ENCODE measurements at regions of chr11 and their contacts with region 1.

Region 1: DNA sequence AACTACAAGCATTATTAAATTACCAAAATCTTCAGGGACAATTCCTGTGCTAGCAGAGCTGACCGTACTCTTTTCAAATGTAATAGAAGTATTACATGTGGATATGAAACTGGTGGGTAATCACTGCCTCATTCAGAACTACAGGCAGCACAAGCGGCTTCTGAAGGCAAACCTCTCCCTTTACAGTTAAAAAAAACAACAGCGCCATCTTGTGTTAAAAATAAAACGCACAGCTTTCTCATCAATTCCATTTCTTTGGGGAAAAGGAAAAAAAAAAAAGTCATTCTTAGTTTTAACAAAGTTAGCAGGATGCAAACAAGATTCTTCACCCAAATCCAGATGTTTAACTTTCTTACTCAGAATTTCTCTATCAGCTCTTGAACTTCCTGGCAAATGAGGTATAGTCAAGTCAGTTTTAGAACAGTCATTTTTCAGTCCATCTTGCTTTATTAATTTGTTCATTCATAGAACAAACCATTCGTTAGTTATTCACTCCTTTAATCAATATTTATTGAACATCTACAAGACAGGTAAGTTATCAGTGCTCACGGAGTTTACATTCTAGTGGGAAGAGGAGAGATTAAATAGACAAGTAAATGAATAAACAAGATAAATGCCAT is 331.8 kb upstream of the MPPED2 start:
- DNase-seq: peak; percentile 26
- H3K4me3 ChIP-seq: no peak overlapping the region
- H3K27ac ChIP-seq: no peak overlapping the region
- H3K4me1 ChIP-seq: no peaks in the 10 kb centered on the region
- H3K27me3 ChIP-seq: peaks cover 4% of the 10 kb centered on the region
- CTCF ChIP-seq: peak; percentile 58 to 61

Region 2: DNA sequence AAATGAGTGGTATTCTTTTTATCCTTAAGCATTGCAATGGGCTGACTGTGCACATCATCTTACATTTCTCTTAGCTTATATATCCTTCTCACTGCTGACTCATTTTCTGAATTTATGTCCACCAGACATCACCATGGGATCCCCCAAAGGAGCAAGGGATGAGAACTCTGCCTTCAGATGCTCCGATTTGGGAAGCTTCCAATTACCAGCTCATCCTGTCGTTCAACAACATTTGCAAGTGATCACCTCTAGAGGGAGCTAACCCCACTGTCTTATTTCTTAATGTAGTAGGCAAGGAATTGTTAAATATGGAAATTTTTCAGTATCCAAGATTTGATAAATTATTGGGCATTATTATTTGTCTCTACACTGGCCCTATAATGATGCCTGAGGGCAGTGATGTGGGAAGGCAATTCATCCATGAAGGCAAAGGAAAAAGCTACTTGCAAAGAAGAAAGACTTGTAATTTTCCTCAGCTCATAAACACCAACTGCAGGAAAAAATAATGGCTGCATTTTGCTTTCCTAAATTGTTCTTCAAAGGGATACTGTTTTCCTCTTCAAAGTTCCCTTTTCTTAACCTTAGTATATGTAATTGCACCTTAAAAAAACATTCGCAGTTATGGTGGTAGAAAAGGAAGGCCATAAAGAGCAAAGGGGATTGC is 789.6 kb before region 1 on chr11:
- CTCF ChIA-PET with region 1: no interaction called
- dilution Hi-C with region 1: no loop called
- in situ Hi-C with region 1: no loop called
- intact Hi-C with region 1: loop called (anchors 10 kb)
- DNase-seq: peak; percentile 32
- H3K4me3 ChIP-seq: no peak overlapping the region
- H3K27ac ChIP-seq: no peak overlapping the region
- H3K4me1 ChIP-seq: no peaks in the 10 kb centered on the region
- H3K27me3 ChIP-seq: no peaks in the 10 kb centered on the region
- CTCF ChIP-seq: peak; percentile 74 to 91

Region 3: GRCh38 chr11:30346068-30346688 is 571.8 kb before region 1 on chr11:
- CTCF ChIA-PET with region 1: no interaction called
- dilution Hi-C with region 1: loop called (anchors 10 kb)
- in situ Hi-C with region 1: loop called (anchors 10 kb)
- intact Hi-C with region 1: loop called (anchors 1 kb)
- DNase-seq: peak; percentile 25
- H3K4me3 ChIP-seq: no peak overlapping the region
- H3K27ac ChIP-seq: no peak overlapping the region
- H3K4me1 ChIP-seq: no peaks in the 10 kb centered on the region
- H3K27me3 ChIP-seq: no peaks in the 10 kb centered on the region
- CTCF ChIP-seq: peak; percentile 57 to 59

Region 4: DNA sequence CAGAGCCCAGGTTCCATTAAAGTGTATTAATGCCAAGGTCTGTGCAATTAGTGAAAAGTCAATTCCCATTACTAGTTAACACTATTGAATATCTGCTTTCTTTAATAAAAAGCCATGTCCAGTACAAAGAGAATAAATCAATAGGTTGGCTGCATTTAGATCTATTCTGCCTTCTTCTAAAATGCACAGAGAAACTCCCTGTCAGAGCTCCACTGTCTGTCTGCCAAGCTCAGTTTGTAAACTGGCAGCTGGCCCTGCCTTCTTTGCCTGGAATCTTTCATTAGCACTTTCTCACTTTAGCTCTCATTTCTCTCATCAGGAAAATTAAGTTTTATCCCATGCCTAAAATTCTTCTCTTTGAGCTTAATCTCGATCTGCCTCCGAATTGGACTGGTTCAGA is 559.4 kb before region 1 on chr11:
- CTCF ChIA-PET with region 1: no interaction called
- dilution Hi-C with region 1: loop called (anchors 10 kb)
- in situ Hi-C with region 1: loop called in 1 of 2 experiments (anchors 10 kb)
- intact Hi-C with region 1: no loop called
- DNase-seq: no peak
- H3K4me3 ChIP-seq: no peak overlapping the region
- H3K27ac ChIP-seq: no peak overlapping the region
- H3K4me1 ChIP-seq: peaks cover 8% of the 10 kb centered on the region
- H3K27me3 ChIP-seq: peaks cover 4% of the 10 kb centered on the region
- CTCF ChIP-seq: no peak

Region 5: DNA sequence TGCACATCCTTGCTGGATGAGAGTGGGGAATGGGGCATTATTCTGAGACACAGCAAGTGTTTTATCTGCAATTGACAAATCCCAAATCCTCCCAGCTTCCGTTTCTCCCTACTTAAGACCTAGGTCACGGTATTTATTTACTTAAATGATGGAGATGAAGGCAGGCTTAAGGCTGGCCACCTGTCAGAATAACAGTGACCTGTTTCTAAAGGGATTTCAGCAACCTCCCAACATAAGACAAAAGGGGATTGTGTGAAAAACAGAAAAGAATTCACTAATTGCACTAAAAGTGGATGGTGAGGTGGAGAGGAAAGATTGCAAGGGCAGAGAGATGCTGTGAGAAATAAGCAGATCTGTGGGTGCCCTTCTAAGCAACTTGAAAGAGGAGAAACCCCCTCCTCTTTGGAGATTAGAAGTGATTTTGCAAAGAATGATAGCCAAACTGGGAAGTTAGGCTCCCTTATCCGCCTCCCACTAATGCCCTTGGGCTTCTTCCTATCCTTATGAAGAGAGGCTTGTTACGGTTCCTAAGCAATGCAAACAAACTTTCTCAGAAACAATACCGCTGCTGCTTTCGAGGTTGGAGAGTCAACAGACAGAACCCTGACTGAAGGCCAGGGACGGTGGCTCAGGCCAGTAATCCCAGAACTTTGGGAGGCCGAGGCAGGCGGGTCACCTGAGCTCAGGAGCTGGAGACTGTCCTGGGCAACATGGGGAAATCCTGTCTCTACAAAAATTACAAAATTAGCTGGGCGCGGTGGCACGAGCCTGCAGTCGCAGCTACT is 510.8 kb before region 1 on chr11:
- CTCF ChIA-PET with region 1: no interaction called
- dilution Hi-C with region 1: no loop called
- in situ Hi-C with region 1: no loop called
- intact Hi-C with region 1: no loop called
- DNase-seq: no peak
- H3K4me3 ChIP-seq: no peak overlapping the region
- H3K27ac ChIP-seq: no peak overlapping the region
- H3K4me1 ChIP-seq: no peaks in the 10 kb centered on the region
- H3K27me3 ChIP-seq: no peaks in the 10 kb centered on the region
- CTCF ChIP-seq: no peak